Naive thymus-derived CD4-positive, alpha-beta T cell (primary cell): ENCODE measurements at regions of chr7 and their contacts with region 1.

Region 1: GRCh38 chr7:74449809-74450397 is 3.8 kb upstream of the GTF2IRD1 start:
- DNase-seq: peak; percentile 31 to 75 (median 60)
- ATAC-seq: peak; percentile 49
- H3K4me3 ChIP-seq: no peak overlapping the region
- H3K4me3 Mint-ChIP-seq: no peak overlapping the region
- H3K27ac ChIP-seq: no peak overlapping the region
- H3K27ac Mint-ChIP-seq: peak overlapping the region in 5 of 9 donors; percentile 40 to 84 (median 58)
- H3K4me1 ChIP-seq: peaks cover 0 to 5% of the 10 kb centered on the region in 2 donors
- H3K4me1 Mint-ChIP-seq: peaks cover 7 to 19% (median 14%) of the 10 kb centered on the region in 7 donors
- H3K27me3 ChIP-seq: no peaks in the 10 kb centered on the region
- H3K27me3 Mint-ChIP-seq: peaks cover 0 to 20% (median 0%) of the 10 kb centered on the region in 5 donors

Region 2: GRCh38 chr7:74173866-74174605 is 275.9 kb before region 1 on chr7 and contains the start of gene EIF4H:
- CTCF ChIA-PET with region 1: no interaction called
- POLR2A ChIA-PET with region 1: no interaction called
- intact Hi-C with region 1: loop called in 1 of 2 experiments (anchors 1 kb)
- DNase-seq: peak; percentile 90 to 97 (median 95)
- ATAC-seq: peak; percentile 97
- H3K4me3 ChIP-seq: peak within 1 kb of the TSS; percentile 87
- H3K4me3 Mint-ChIP-seq: peak within 1 kb of the TSS; percentile 86 to 98 (median 92)
- H3K27ac ChIP-seq: peak within 1 kb of the TSS; percentile 99
- H3K27ac Mint-ChIP-seq: peak within 1 kb of the TSS; percentile 88 to 97 (median 94)
- H3K4me1 ChIP-seq: peaks cover 41 to 43% of the 10 kb centered on the region in 2 donors
- H3K4me1 Mint-ChIP-seq: peaks cover 32 to 57% (median 47%) of the 10 kb centered on the region in 7 donors
- H3K27me3 ChIP-seq: no peaks in the 10 kb centered on the region
- H3K27me3 Mint-ChIP-seq: no peaks in the 10 kb centered on the region
- total RNA-seq, gene EIF4H: 163 to 284 (median 223) TPM

Region 3: GRCh38 chr7:74187915-74188630 is 261.8 kb before region 1 on chr7:
- CTCF ChIA-PET with region 1: no interaction called
- POLR2A ChIA-PET with region 1: no interaction called
- intact Hi-C with region 1: no loop called
- DNase-seq: no peak
- ATAC-seq: no peak
- H3K4me3 ChIP-seq: no peak overlapping the region
- H3K4me3 Mint-ChIP-seq: no peak overlapping the region
- H3K27ac ChIP-seq: no peak overlapping the region
- H3K27ac Mint-ChIP-seq: peak overlapping the region in 8 of 9 donors; percentile 9 to 76 (median 56)
- H3K4me1 ChIP-seq: peaks cover 11 to 32% of the 10 kb centered on the region in 2 donors
- H3K4me1 Mint-ChIP-seq: peaks cover 44 to 60% (median 52%) of the 10 kb centered on the region in 7 donors
- H3K27me3 ChIP-seq: no peaks in the 10 kb centered on the region
- H3K27me3 Mint-ChIP-seq: no peaks in the 10 kb centered on the region

Region 4: DNA sequence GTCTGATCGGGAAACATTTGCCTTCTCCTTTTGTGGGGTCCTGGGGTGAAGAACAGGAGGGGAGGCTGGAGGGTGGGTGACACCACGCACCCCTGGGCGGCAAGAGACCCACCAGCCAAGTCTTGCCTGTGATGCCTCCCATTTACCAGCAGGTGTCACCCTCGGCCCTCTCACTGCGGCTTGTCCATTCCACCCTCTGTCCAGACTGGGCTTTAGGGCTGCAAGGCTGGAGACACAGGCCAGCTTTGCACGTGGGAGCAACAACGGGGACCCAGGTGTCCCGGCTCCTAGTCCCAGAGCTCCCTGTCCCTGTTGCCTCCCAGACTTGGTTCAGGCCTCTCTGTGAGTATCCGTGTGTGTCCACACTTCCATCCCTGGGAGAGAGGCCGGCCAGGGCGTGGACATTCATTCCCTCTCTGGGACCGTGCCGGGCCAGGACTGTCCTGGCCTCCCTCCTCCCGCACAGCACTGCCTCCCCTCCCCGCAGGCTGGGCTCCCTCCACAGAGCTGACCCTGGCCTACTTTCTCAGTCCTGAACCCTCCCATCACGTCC is 32.4 kb before region 1 on chr7:
- CTCF ChIA-PET with region 1: interaction called, 3 read pairs
- POLR2A ChIA-PET with region 1: no interaction called
- intact Hi-C with region 1: loop called in 1 of 2 experiments (anchors 1 kb)
- DNase-seq: peak in 8 of 9 donors; percentile 12 to 66 (median 45)
- ATAC-seq: peak; percentile 80
- H3K4me3 ChIP-seq: no peak overlapping the region
- H3K4me3 Mint-ChIP-seq: no peak overlapping the region
- H3K27ac ChIP-seq: no peak overlapping the region
- H3K27ac Mint-ChIP-seq: no peak overlapping the region
- H3K4me1 ChIP-seq: no peaks in the 10 kb centered on the region
- H3K4me1 Mint-ChIP-seq: peaks cover 0 to 2% (median 0%) of the 10 kb centered on the region in 7 donors
- H3K27me3 ChIP-seq: no peaks in the 10 kb centered on the region
- H3K27me3 Mint-ChIP-seq: no peaks in the 10 kb centered on the region

Region 5: GRCh38 chr7:74439546-74439945 is 10.4 kb before region 1 on chr7:
- CTCF ChIA-PET with region 1: no interaction called
- POLR2A ChIA-PET with region 1: no interaction called
- intact Hi-C with region 1: no loop called
- DNase-seq: no peak
- ATAC-seq: no peak
- H3K4me3 ChIP-seq: no peak overlapping the region
- H3K4me3 Mint-ChIP-seq: no peak overlapping the region
- H3K27ac ChIP-seq: no peak overlapping the region
- H3K27ac Mint-ChIP-seq: no peak overlapping the region
- H3K4me1 ChIP-seq: no peaks in the 10 kb centered on the region
- H3K4me1 Mint-ChIP-seq: no peaks in the 10 kb centered on the region
- H3K27me3 ChIP-seq: no peaks in the 10 kb centered on the region
- H3K27me3 Mint-ChIP-seq: no peaks in the 10 kb centered on the region

Region 6: GRCh38 chr7:74544706-74545469 is 95.0 kb after region 1 on chr7:
- CTCF ChIA-PET with region 1: no interaction called
- POLR2A ChIA-PET with region 1: interaction called, 3 read pairs
- intact Hi-C with region 1: loop called in 1 of 2 experiments (anchors 1 kb)
- DNase-seq: no peak
- ATAC-seq: no peak
- H3K4me3 ChIP-seq: no peak overlapping the region
- H3K4me3 Mint-ChIP-seq: no peak overlapping the region
- H3K27ac ChIP-seq: no peak overlapping the region
- H3K27ac Mint-ChIP-seq: no peak overlapping the region
- H3K4me1 ChIP-seq: no peaks in the 10 kb centered on the region
- H3K4me1 Mint-ChIP-seq: no peaks in the 10 kb centered on the region
- H3K27me3 ChIP-seq: no peaks in the 10 kb centered on the region
- H3K27me3 Mint-ChIP-seq: no peaks in the 10 kb centered on the region

Region 7: DNA sequence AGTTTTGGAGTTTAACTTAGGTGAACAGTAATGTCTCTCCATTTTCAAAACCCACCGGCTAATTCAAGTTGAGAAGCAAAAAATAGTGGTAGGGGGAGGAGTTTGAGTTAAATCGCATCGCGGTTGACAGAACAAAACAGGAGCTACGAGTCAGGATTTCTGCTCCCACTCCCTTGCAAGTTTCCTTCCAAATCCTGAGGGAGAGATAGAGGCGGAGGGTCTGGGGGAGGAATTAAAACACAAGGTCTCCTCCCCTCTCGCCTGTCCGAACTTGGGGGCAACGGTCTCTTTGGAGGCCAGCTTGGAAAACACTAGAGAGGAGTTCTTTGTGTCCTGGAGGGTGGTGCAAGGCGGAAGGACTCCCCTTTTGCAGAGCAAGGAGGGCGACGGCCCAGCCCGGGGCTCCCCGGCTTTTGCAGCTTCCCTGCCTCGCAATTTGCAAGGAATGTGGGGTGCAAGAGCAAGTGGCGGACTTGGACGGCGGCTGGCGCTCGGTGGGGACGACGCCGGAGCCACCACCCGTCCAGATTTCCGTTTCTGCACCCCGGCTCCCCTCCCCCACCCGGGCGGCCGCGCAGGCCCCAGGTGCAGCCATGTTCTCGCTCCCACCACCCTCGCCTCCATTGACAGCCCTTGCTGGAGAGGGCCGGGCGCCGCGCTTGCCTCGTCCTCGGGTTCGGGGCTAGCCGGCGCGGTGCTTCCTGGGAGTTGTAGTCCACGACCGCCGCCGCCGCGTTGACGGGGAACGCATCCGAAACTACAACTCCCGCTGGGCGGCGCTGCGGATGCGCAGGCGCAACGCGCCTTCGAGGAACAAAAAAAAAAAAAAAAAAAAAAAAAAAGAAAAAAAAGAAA is 207.2 kb after region 1 on chr7:
- CTCF ChIA-PET with region 1: no interaction called
- POLR2A ChIA-PET with region 1: interaction called, 3 read pairs
- intact Hi-C with region 1: loop called (anchors 1 to 2 kb)
- DNase-seq: peak; percentile 94 to 97 (median 97)
- ATAC-seq: peak; percentile 88
- H3K4me3 ChIP-seq: peak overlapping the region; percentile 96
- H3K4me3 Mint-ChIP-seq: peak overlapping the region; percentile 90 to 97 (median 94)
- H3K27ac ChIP-seq: peak overlapping the region; percentile 89
- H3K27ac Mint-ChIP-seq: peak overlapping the region; percentile 86 to 98 (median 94)
- H3K4me1 ChIP-seq: peaks cover 12 to 21% of the 10 kb centered on the region in 2 donors
- H3K4me1 Mint-ChIP-seq: peaks cover 35 to 55% (median 43%) of the 10 kb centered on the region in 7 donors
- H3K27me3 ChIP-seq: no peaks in the 10 kb centered on the region
- H3K27me3 Mint-ChIP-seq: peaks cover 0 to 2% (median 0%) of the 10 kb centered on the region in 5 donors